ENCODE measurements at regions of chr2 and their contacts with region 1.

Region 1: GRCh38 chr2:172465417-172466334 is 38.3 kb downstream of the ITGA6 start:
- DNase-seq: peak; percentile 85
- ATAC-seq: peak; percentile 47
- H3K4me3 Mint-ChIP-seq: peak overlapping the region; percentile 11
- H3K27ac Mint-ChIP-seq: peak overlapping the region; percentile 60
- H3K4me1 Mint-ChIP-seq: peaks cover 62% of the 10 kb centered on the region
- H3K27me3 Mint-ChIP-seq: no peaks in the 10 kb centered on the region

Region 2: GRCh38 chr2:171687287-171688128 is 778.2 kb before region 1 on chr2 and contains the start of gene DYNC1I2:
- CTCF ChIA-PET with region 1: interaction called, 3 read pairs
- POLR2A ChIA-PET with region 1: no interaction called
- intact Hi-C with region 1: loop called in 1 of 2 experiments (anchors 5 kb)
- DNase-seq: peak; percentile 86
- ATAC-seq: peak; percentile 95
- H3K4me3 Mint-ChIP-seq: peak within 1 kb of the TSS; percentile 83
- H3K27ac Mint-ChIP-seq: peak within 1 kb of the TSS; percentile 90
- H3K4me1 Mint-ChIP-seq: peaks cover 15% of the 10 kb centered on the region
- H3K27me3 Mint-ChIP-seq: no peaks in the 10 kb centered on the region
- total RNA-seq, gene DYNC1I2: 46.2 to 51.1 TPM

Region 3: DNA sequence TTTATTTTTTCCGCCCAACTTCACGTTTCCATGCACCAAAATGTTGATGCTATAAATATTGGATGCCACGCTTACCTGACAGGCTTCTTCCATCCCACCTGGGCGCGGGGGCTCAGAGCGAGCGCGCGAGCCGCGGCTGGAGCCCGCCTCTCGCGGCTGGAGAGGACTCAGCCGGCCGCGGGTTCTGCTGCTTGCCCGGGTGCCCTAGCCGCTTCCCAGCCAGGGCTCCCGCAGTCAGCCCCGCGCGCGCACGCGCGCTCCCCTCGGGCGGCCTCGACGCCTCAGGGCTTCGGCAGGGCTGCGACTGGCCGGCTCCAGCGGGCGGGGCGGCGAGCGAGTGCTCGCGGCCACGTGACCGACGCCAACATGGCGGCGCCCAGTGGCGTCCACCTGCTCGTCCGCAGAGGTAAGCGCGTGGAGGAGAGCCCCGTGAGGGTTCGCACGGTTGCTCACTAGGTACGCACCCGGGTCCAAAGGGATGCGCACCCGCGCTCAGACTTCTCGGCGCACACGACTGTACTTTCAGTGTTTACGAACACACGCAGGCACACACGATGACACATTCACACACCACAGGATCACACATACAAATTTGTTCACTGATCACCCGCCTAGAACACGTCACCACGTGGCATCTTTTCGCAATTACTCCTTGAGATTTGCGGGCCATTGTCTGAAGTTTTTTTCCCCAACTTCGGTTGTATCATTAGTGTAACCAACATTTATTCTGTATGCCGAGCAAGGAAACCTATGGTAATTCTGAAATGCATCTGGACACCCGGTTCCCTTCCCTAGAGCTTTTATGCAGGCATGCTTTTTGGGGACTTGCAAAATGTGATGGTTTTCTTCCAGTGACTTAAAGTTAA is 465.8 kb before region 1 on chr2 and contains the start of gene METAP1D:
- CTCF ChIA-PET with region 1: no interaction called
- POLR2A ChIA-PET with region 1: no interaction called
- intact Hi-C with region 1: loop called in 1 of 2 experiments (anchors 10 kb)
- DNase-seq: peak; percentile 93
- ATAC-seq: peak; percentile 95
- H3K4me3 Mint-ChIP-seq: peak within 1 kb of the TSS; percentile 75
- H3K27ac Mint-ChIP-seq: peak within 1 kb of the TSS; percentile 87
- H3K4me1 Mint-ChIP-seq: peaks cover 18% of the 10 kb centered on the region
- H3K27me3 Mint-ChIP-seq: no peaks in the 10 kb centered on the region
- total RNA-seq, gene METAP1D: 5.3 to 6.0 TPM

Region 4: GRCh38 chr2:172172513-172173173 is 293.0 kb before region 1 on chr2:
- CTCF ChIA-PET with region 1: interaction called, 106 read pairs
- POLR2A ChIA-PET with region 1: no interaction called
- intact Hi-C with region 1: loop called (anchors 1 kb)
- DNase-seq: peak; percentile 77
- ATAC-seq: peak; percentile 97
- H3K4me3 Mint-ChIP-seq: peak overlapping the region; percentile 55
- H3K27ac Mint-ChIP-seq: no peak overlapping the region
- H3K4me1 Mint-ChIP-seq: peaks cover 4% of the 10 kb centered on the region
- H3K27me3 Mint-ChIP-seq: peaks cover 4% of the 10 kb centered on the region

Region 5: DNA sequence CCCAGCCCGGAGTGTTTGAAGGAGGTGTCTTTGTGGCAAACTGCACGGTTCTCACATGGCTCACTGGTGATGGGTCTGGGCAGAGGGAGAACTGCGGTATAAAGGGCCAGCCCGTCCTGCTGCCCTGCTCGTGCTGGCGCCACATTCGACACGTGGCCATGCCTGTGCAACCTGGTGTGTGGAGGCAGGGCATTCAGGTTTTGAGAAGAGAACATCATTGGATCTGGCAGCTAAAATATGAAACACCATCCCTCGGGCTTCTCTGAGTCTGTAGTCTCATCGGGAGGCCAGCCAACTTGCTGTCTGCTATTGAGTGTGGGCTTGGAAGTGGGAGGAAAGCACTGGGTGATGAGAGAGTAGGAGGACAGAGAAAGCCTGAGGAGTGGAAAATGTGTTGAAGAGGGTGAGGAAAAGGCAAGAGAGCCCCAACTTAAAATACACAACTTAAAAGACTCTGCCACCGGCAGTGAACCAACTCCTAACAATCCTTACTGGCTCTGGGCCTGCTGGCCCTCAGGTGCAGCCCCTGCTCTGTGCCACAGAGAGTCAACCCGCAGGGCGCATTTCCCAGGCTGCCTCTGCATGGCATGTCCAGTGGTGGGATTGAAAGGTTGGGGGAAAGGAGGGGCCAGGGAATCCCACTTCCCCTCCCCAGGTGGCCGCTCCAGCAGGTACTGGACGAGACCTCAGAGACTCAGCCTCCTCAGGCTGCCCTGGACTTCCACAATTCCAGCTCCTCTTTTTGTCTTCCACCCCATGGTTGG is 250.3 kb before region 1 on chr2:
- CTCF ChIA-PET with region 1: no interaction called
- POLR2A ChIA-PET with region 1: no interaction called
- intact Hi-C with region 1: no loop called
- DNase-seq: no peak
- ATAC-seq: no peak
- H3K4me3 Mint-ChIP-seq: no peak overlapping the region
- H3K27ac Mint-ChIP-seq: no peak overlapping the region
- H3K4me1 Mint-ChIP-seq: peaks cover 13% of the 10 kb centered on the region
- H3K27me3 Mint-ChIP-seq: no peaks in the 10 kb centered on the region

Region 6: GRCh38 chr2:172339371-172340010 is 126.2 kb before region 1 on chr2:
- CTCF ChIA-PET with region 1: interaction called, 5 read pairs
- POLR2A ChIA-PET with region 1: no interaction called
- intact Hi-C with region 1: loop called (anchors 2 to 10 kb)
- DNase-seq: peak; percentile 17
- ATAC-seq: peak; percentile 51
- H3K4me3 Mint-ChIP-seq: peak overlapping the region; percentile 42
- H3K27ac Mint-ChIP-seq: peak overlapping the region; percentile 10
- H3K4me1 Mint-ChIP-seq: peaks cover 18% of the 10 kb centered on the region
- H3K27me3 Mint-ChIP-seq: no peaks in the 10 kb centered on the region

Region 7: DNA sequence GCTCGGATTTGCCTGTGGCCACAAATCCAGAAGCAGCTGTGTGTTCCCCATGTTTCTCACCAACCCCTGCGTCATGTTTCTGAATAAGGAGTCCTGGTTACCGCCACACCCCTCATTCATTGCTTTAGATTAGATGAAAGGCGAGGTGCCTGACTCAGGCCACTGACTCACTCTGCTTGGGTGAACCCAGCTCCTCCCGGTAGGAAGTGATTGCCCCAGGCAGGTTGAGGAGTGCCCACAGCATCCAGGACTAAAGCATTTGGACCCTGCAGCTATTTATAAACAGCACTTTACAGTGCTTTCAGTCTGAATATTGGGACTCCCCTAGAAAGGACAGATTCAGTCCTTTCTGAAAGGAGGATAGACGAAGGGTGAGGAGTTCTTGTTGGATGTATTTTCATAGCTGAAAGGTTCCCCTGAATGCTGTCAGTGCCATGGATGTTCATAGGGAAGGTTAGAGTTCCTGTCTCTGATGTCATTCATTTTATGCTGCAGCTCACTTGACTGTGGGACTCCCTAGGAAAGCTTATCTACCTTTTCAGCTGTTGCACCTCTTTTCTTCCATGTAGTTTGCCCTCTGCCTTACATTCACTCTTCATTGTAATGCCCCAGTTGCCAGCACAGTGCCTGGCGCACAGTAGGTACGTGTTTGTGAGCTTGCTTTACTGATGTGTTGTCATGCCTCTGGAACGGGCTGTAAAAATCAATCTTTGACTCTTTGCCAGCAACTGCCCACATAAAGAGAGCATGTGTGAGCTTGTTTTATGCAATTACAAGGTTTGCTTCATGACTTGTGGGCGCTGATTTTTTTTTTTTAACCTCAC is 23.4 kb before region 1 on chr2:
- CTCF ChIA-PET with region 1: interaction called, 405 read pairs
- POLR2A ChIA-PET with region 1: interaction called, 3 read pairs
- intact Hi-C with region 1: loop called (anchors 2 kb)
- DNase-seq: peak; percentile 82
- ATAC-seq: peak; percentile 70
- H3K4me3 Mint-ChIP-seq: peak overlapping the region; percentile 32
- H3K27ac Mint-ChIP-seq: peak overlapping the region; percentile 75
- H3K4me1 Mint-ChIP-seq: peaks cover 49% of the 10 kb centered on the region
- H3K27me3 Mint-ChIP-seq: no peaks in the 10 kb centered on the region

Region 8: DNA sequence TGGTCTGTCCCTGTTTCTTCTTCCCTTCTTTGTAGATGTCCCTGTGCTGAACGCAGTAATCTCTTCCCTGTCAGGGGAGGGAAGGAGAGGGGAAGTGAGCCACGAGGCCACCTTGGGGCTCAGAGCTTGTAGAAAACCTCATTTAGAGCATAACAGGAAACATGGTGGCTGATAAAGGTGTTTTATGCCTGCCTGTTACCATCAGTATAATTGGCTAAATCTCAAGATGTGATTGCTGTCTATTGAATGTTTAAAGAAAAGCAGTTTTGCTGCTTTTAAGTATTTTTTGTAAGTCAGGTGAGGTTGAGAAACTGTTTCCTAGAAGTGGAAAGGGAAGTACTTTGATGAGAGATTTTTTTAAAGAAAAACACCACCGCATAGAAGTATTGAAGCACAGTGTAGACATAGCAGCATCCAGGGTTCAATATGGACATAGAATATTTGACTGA is 30.5 kb after region 1 on chr2:
- CTCF ChIA-PET with region 1: interaction called, 10 read pairs
- POLR2A ChIA-PET with region 1: no interaction called
- intact Hi-C with region 1: no loop called
- DNase-seq: peak; percentile 23
- ATAC-seq: peak; percentile 74
- H3K4me3 Mint-ChIP-seq: peak overlapping the region; percentile 38
- H3K27ac Mint-ChIP-seq: peak overlapping the region; percentile 95
- H3K4me1 Mint-ChIP-seq: peaks cover 64% of the 10 kb centered on the region
- H3K27me3 Mint-ChIP-seq: no peaks in the 10 kb centered on the region

Region 9: DNA sequence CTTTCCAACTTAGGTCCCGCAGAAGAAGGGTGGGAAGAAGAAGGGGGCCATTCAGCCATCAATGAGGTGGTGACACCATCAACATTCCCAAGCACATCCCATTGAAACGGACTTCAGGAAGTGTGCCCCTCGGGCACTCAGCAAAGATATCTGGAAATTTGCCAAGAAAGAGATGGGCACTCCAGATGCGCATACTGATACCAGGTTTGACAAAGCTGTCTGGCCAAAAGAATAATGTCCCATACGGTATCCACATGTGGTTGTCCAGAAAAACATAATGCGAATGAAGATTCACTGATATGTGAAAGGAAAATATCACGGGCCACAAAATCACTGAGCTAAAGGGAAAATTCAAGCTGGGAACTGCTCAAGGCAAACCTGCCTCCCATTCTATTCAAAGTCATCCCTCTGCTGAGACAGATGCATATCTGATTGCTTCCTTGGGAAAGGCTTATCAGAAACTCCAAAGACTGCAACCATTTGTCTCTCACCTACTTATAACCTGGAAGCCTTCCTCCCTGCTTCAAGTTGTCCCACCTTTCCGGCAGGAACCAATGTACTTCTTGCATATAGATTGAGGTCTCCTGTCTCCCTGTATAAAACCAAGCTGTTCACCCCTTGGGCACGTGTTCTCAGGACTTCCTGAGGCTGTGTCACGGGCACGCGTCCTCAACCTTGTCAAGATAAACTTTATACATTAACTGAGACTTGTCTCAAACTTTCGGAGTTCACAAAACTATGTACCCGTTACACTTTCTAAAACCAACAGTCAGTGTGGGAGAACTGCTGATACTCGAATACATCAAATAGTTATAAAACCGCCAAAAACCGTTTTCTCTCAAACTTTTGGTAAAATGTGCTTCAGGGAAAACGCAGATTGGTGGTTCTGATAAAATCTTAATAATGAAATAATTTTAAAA is 88.9 kb after region 1 on chr2:
- CTCF ChIA-PET with region 1: no interaction called
- POLR2A ChIA-PET with region 1: no interaction called
- intact Hi-C with region 1: no loop called
- DNase-seq: peak; percentile 25
- ATAC-seq: no peak
- H3K4me3 Mint-ChIP-seq: peak overlapping the region; percentile 88
- H3K27ac Mint-ChIP-seq: peak overlapping the region; percentile 59
- H3K4me1 Mint-ChIP-seq: peaks cover 63% of the 10 kb centered on the region
- H3K27me3 Mint-ChIP-seq: peaks cover 6% of the 10 kb centered on the region